ENCODE measurements at regions of chr1 and their contacts with region 1.

Region 1: GRCh38 chr1:67430352-67431155 is at the start of gene SERBP1:
- DNase-seq: peak; percentile 94 to 97 (median 96)
- H3K4me3 ChIP-seq: peak within 1 kb of the TSS; percentile 87 to 91
- H3K4me3 Mint-ChIP-seq: peak within 1 kb of the TSS; percentile 92 to 99 (median 95)
- H3K27ac ChIP-seq: peak within 1 kb of the TSS; percentile 88
- H3K27ac Mint-ChIP-seq: peak within 1 kb of the TSS; percentile 96 to 99 (median 98)
- H3K4me1 ChIP-seq: peaks cover 36% of the 10 kb centered on the region
- H3K4me1 Mint-ChIP-seq: peaks cover 29 to 57% (median 34%) of the 10 kb centered on the region in 4 donors
- H3K27me3 ChIP-seq: no peaks in the 10 kb centered on the region
- H3K27me3 Mint-ChIP-seq: no peaks in the 10 kb centered on the region
- total RNA-seq, gene SERBP1: 148 to 154 TPM

Region 2: DNA sequence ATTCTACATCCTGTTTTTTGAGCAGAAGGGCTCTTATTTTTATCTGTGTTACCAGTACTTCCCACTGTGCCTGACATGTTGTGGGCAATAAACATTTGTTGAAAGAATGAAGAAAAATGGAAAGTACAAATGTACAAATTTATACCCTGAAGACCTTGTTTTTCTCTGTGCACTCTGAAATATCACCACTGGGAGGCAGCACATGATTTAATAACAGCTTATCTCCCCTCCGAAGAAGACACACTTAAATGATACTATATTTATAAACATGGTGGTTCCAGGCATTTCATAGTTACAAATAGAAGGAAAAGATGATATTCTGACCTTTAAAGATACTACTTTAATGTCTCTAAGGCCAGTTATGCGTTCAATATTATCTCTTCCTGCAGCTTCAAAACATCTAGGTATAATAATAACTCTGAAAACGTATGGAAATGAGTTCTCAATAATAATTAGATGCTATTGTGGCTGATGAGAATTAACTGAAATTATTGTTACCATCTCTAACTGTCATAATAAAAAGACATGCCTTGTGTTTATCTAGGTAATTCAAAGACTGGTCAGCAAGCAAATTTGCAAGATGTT is 665.5 kb before region 1 on chr1:
- CTCF ChIA-PET with region 1: no interaction called
- POLR2A ChIA-PET with region 1: no interaction called
- intact Hi-C with region 1: loop called (anchors 10 kb)
- DNase-seq: peak; percentile 53 to 59 (median 54)
- H3K4me3 ChIP-seq: no peak overlapping the region
- H3K4me3 Mint-ChIP-seq: no peak overlapping the region
- H3K27ac ChIP-seq: no peak overlapping the region
- H3K27ac Mint-ChIP-seq: no peak overlapping the region
- H3K4me1 ChIP-seq: peaks cover 13% of the 10 kb centered on the region
- H3K4me1 Mint-ChIP-seq: peaks cover 13 to 17% (median 15%) of the 10 kb centered on the region in 4 donors
- H3K27me3 ChIP-seq: no peaks in the 10 kb centered on the region
- H3K27me3 Mint-ChIP-seq: no peaks in the 10 kb centered on the region

Region 3: DNA sequence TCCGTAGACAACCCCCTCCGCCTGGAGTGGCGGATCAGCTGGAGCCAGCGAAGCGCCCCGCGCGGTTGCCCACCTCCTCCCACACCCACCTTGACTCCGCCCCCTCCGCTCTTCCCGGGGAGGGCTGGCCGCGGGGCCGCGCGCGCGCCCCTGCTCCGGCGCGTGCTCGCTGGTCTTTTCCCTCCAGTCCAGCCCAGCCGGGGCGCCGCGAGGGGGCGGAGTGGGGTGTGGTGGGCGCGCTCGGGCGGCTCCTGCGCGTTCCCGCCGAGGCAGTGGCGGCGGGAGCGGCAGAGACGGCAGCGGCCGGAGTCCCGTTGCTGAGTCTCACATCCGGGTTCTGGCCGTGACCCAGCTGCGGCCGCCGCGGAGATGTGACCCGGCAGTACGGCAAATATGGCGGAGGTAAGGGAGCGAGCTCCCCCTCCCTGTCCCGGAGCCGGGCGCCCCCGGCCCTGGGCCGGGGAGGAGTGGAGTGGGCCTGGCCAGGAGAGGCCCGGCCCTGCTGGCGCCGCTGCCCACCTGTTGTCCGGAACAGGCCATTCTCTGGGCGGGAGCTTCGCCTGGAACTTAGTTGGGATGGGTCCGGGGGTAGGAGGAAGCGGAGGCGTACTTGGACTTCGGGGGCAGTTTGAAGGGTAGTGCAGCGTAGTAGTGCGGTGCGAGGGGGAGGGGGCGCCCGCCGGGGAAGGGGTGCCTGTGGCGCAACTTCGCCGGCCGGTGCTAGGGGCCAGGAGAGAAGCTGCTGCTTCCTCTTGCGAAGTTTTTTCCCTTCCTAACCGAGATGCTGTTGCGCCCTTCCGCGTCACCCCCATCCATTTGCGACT is 500.3 kb before region 1 on chr1:
- CTCF ChIA-PET with region 1: no interaction called
- POLR2A ChIA-PET with region 1: interaction called, 23 read pairs
- intact Hi-C with region 1: loop called (anchors 1 kb)
- DNase-seq: peak; percentile 90 to 95 (median 93)
- H3K4me3 ChIP-seq: peak overlapping the region; percentile 67 to 95
- H3K4me3 Mint-ChIP-seq: peak overlapping the region; percentile 83 to 95 (median 89)
- H3K27ac ChIP-seq: peak overlapping the region; percentile 95
- H3K27ac Mint-ChIP-seq: peak overlapping the region; percentile 76 to 97 (median 95)
- H3K4me1 ChIP-seq: peaks cover 63% of the 10 kb centered on the region
- H3K4me1 Mint-ChIP-seq: peaks cover 36 to 81% (median 51%) of the 10 kb centered on the region in 4 donors
- H3K27me3 ChIP-seq: no peaks in the 10 kb centered on the region
- H3K27me3 Mint-ChIP-seq: no peaks in the 10 kb centered on the region

Region 4: DNA sequence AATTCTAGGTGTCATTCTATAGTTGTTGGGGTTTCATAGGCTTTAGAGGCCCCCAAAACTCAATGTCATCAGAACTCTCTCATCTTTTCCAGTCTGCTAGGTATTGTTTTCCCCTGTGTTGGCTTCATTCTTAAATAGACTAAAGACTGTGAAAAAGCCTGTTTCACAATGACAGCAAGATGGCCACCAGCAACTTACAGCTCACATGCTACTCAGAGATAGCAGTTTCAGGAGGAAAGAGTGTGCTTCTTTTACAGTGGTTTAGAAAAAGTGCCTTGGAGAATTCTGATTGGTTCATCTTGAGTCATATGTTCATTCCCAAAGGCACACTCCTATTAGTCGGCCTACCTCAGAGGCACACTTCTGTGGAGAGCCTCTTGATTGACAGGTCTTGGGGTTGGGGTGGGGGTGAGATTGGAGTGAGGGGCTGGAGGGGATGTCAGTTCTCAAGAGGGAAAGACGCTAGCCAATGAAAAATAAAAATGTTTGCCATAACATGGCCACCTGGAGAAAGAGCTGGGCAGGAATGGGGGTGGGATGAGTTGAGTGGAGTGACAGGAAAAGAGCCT is 255.8 kb before region 1 on chr1:
- CTCF ChIA-PET with region 1: no interaction called
- POLR2A ChIA-PET with region 1: interaction called, 6 read pairs
- intact Hi-C with region 1: loop called (anchors 1 kb)
- DNase-seq: no peak
- H3K4me3 ChIP-seq: no peak overlapping the region
- H3K4me3 Mint-ChIP-seq: peak overlapping the region in 2 of 8 donors; percentile 21 to 40
- H3K27ac ChIP-seq: no peak overlapping the region
- H3K27ac Mint-ChIP-seq: peak overlapping the region in 1 of 7 donors; percentile 52
- H3K4me1 ChIP-seq: peaks cover 40% of the 10 kb centered on the region
- H3K4me1 Mint-ChIP-seq: peaks cover 30 to 59% (median 44%) of the 10 kb centered on the region in 4 donors
- H3K27me3 ChIP-seq: no peaks in the 10 kb centered on the region
- H3K27me3 Mint-ChIP-seq: peaks cover 5 to 7% of the 10 kb centered on the region in 2 donors

Region 5: GRCh38 chr1:67418839-67419586 is 11.5 kb before region 1 on chr1:
- CTCF ChIA-PET with region 1: interaction called, 4 read pairs
- POLR2A ChIA-PET with region 1: interaction called, 24 read pairs
- intact Hi-C with region 1: no loop called
- DNase-seq: no peak
- H3K4me3 ChIP-seq: no peak overlapping the region
- H3K4me3 Mint-ChIP-seq: peak overlapping the region in 4 of 8 donors; percentile 1 to 13 (median 6)
- H3K27ac ChIP-seq: no peak overlapping the region
- H3K27ac Mint-ChIP-seq: peak overlapping the region in 5 of 7 donors; percentile 57 to 77 (median 70)
- H3K4me1 ChIP-seq: peaks cover 42% of the 10 kb centered on the region
- H3K4me1 Mint-ChIP-seq: peaks cover 34 to 74% (median 54%) of the 10 kb centered on the region in 4 donors
- H3K27me3 ChIP-seq: no peaks in the 10 kb centered on the region
- H3K27me3 Mint-ChIP-seq: no peaks in the 10 kb centered on the region

Region 6: GRCh38 chr1:67524143-67525052 is 93.8 kb after region 1 on chr1:
- CTCF ChIA-PET with region 1: no interaction called
- POLR2A ChIA-PET with region 1: no interaction called
- intact Hi-C with region 1: no loop called
- DNase-seq: no peak
- H3K4me3 ChIP-seq: no peak overlapping the region
- H3K4me3 Mint-ChIP-seq: no peak overlapping the region
- H3K27ac ChIP-seq: no peak overlapping the region
- H3K27ac Mint-ChIP-seq: peak overlapping the region in 1 of 7 donors; percentile 20
- H3K4me1 ChIP-seq: no peaks in the 10 kb centered on the region
- H3K4me1 Mint-ChIP-seq: no peaks in the 10 kb centered on the region
- H3K27me3 ChIP-seq: no peaks in the 10 kb centered on the region
- H3K27me3 Mint-ChIP-seq: peaks cover 10 to 14% of the 10 kb centered on the region in 2 donors

Region 7: DNA sequence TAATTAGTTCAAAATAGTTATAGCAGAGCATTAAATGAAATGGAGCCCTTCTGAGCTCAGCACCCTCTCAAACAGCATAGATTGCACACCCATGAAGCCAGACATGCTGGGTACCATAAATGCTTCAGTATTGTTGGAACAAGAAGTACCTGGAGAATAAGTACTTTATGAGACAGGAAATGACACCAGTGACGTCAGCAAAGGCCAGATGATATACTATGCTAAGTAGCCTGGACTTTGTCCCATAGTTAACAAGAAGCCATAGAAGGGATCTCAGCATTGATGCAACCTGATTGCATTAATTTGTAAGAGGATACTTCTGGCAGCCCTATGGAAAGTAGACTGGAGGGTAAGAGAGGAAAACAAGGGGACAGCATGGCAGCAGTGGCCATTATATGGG is 238.1 kb after region 1 on chr1:
- CTCF ChIA-PET with region 1: no interaction called
- POLR2A ChIA-PET with region 1: no interaction called
- intact Hi-C with region 1: no loop called
- DNase-seq: no peak
- H3K4me3 ChIP-seq: no peak overlapping the region
- H3K4me3 Mint-ChIP-seq: no peak overlapping the region
- H3K27ac ChIP-seq: no peak overlapping the region
- H3K27ac Mint-ChIP-seq: no peak overlapping the region
- H3K4me1 ChIP-seq: peaks cover under 1% of the 10 kb centered on the region
- H3K4me1 Mint-ChIP-seq: peaks cover 0 to 4% (median 1%) of the 10 kb centered on the region in 4 donors
- H3K27me3 ChIP-seq: no peaks in the 10 kb centered on the region
- H3K27me3 Mint-ChIP-seq: peaks cover 15 to 16% of the 10 kb centered on the region in 2 donors